K562 (cell line): ENCODE measurements at regions of chr9 and their contacts with region 1.

Region 1: GRCh38 chr9:14909961-14910805 is at the start of gene FREM1:
- DNase-seq: peak in 1 of 4 experiments; percentile 22
- ATAC-seq: no peak
- H3K4me3 ChIP-seq: no peak within 1 kb of the TSS
- H3K27ac ChIP-seq: no peak within 1 kb of the TSS
- H3K4me1 ChIP-seq: peaks cover 0 to 11% of the 10 kb centered on the region in 2 experiments; a peak in 3 of 5 replicates
- H3K27me3 ChIP-seq: no peaks in the 10 kb centered on the region; a peak in 1 of 5 replicates
- CTCF ChIP-seq: no peak
- EP300 ChIP-seq: no peak
- POLR2A ChIP-seq: no peak
- RAD21 ChIP-seq: no peak
- polyA plus RNA-seq, gene FREM1: 0.07 TPM in 1 of 2 experiments, not detected in the other

Region 2: GRCh38 chr9:13769006-13769405 is 1141.2 kb before region 1 on chr9:
- CTCF ChIA-PET with region 1: no interaction called
- POLR2A ChIA-PET with region 1: no interaction called
- in situ Hi-C with region 1: no loop called
- intact Hi-C with region 1: loop called (anchors 10 kb)
- DNase-seq: no peak
- ATAC-seq: no peak
- H3K4me3 ChIP-seq: no peak overlapping the region
- H3K27ac ChIP-seq: no peak overlapping the region
- H3K4me1 ChIP-seq: no peaks in the 10 kb centered on the region
- H3K27me3 ChIP-seq: no peaks in the 10 kb centered on the region
- CTCF ChIP-seq: no peak
- EP300 ChIP-seq: no peak
- POLR2A ChIP-seq: no peak
- RAD21 ChIP-seq: no peak

Region 3: DNA sequence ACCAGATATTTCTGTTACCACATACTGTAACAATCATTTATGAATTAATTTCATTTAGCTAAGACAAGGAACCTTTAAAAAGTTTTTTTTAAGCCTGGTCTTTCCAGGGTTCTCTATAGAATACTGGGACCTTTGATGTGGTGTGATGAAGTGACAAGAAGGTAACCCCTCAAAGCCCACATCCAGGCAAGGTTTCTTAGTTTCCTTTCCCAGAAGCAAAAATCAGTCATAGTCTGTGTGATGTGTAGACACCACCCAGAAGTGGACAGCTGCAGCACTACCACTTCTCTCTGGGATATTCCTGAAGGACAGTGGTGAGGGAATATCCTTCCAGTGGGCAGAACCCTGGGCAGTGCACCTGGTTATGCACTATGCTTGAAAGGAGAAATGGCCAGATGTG is 281.2 kb after region 1 on chr9:
- CTCF ChIA-PET with region 1: no interaction called
- POLR2A ChIA-PET with region 1: no interaction called
- in situ Hi-C with region 1: no loop called
- intact Hi-C with region 1: no loop called
- DNase-seq: no peak
- ATAC-seq: no peak
- H3K4me3 ChIP-seq: no peak overlapping the region
- H3K27ac ChIP-seq: no peak overlapping the region
- H3K4me1 ChIP-seq: no peaks in the 10 kb centered on the region
- H3K27me3 ChIP-seq: no peaks in the 10 kb centered on the region
- CTCF ChIP-seq: no peak
- EP300 ChIP-seq: no peak
- POLR2A ChIP-seq: no peak
- RAD21 ChIP-seq: no peak